Tibial artery (tissue), 4 donors: ENCODE measurements at regions of chr1 and their contacts with region 1.

Region 1: DNA sequence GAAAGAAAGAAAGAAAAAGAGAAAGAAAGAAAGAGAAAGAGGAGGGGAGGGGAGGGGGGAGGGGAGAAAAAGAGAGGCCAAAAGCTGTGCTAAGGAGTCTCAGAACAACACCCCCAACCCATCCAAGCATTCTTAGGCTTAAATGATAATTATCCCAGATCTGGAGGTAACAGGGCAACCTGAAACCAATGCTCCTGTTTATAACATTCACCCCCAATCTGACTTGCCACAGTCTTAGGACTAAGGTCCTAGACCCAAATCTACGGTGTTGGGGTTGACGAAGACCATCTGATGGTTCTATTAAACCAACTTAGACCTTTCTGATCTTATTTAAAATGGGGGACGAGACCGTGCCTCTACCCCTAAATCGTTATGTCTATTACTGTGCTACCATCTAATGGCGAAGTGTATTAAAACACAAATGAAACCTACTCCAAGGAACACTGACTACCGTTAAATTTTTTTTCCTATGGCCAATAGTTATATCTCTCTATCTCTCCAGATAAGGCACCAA is 119.3 kb upstream of the CDC42BPA start:
- DNase-seq: no peak
- H3K4me3 ChIP-seq: peak overlapping the region; percentile 37 to 41
- H3K27ac ChIP-seq: peak overlapping the region in 1 of 2 donors; percentile 51
- H3K4me1 ChIP-seq: peaks cover 0 to 5% (median 4%) of the 10 kb centered on the region in 4 donors
- H3K27me3 ChIP-seq: no peaks in the 10 kb centered on the region
- CTCF ChIP-seq: peak; percentile 41 to 57

Region 2: GRCh38 chr1:226634166-226634588 is 803.4 kb before region 1 on chr1:
- intact Hi-C with region 1: loop called (anchors 10 kb)
- DNase-seq: peak; percentile 80 to 88
- H3K4me3 ChIP-seq: no peak overlapping the region
- H3K27ac ChIP-seq: peak overlapping the region; percentile 40 to 50
- H3K4me1 ChIP-seq: peaks cover 0 to 18% (median 9%) of the 10 kb centered on the region in 4 donors
- H3K27me3 ChIP-seq: no peaks in the 10 kb centered on the region
- CTCF ChIP-seq: peak; percentile 94 to 95

Region 3: GRCh38 chr1:227234998-227235405 is 202.6 kb before region 1 on chr1:
- intact Hi-C with region 1: loop called (anchors 10 kb)
- DNase-seq: no peak
- H3K4me3 ChIP-seq: no peak overlapping the region
- H3K27ac ChIP-seq: no peak overlapping the region
- H3K4me1 ChIP-seq: peaks cover 0 to 24% (median 0%) of the 10 kb centered on the region in 4 donors
- H3K27me3 ChIP-seq: no peaks in the 10 kb centered on the region
- CTCF ChIP-seq: peak in 1 of 2 experiments; percentile 31